ENCODE measurements at regions of chr3 and their contacts with region 1.

Region 1: DNA sequence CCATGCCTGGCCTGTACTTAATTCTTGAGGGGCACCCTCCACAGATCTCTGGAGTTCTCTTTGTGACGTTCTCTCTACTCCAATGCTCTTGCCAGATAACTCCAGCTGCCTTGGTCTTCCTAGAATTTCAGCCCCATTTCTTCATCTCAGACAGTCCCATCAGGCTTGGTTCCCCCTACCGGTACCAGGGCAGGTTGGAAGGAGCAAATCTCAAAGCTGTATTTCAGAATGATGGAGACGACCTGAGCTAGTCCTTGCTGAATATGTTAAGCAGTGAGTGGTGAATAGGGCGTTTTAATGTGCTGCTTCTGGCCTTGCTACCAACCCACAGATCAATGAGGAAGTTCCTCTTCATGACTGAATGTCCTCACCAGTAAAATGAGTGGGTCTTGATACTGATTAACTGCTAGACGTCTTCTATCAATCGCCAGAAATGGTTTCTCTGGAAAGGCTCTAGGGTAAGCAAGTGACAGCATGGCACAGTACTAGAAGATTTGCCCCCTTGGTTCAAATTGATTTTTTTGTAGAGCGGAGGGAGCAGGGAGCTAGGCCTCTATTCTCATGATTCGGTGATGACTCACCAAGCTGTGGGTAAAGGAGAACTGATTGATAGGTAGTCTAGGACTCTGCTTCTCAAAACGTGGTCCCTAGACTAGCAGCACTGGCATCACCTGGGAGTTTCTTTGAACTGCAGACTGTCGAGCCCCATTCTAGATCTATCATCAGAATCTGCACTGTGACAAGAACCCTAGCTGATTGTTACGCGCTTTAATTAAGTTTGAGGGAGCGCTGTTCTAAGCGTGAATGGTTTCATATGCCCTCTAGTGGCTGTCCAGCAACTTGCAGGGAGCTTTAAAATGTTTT is 67.8 kb downstream of the UBP1 start:
- DNase-seq: peak in 2 of 5 donors; percentile 30 to 48
- H3K4me3 ChIP-seq: no peak overlapping the region
- H3K27ac ChIP-seq: no peak overlapping the region
- H3K4me1 ChIP-seq: no peaks in the 10 kb centered on the region
- H3K27me3 ChIP-seq: no peaks in the 10 kb centered on the region
- CTCF ChIP-seq: peak; percentile 55 to 74 (median 72)
- EP300 ChIP-seq: no peak
- POLR2A ChIP-seq: no peak

Region 2: GRCh38 chr3:32951410-32951811 is 421.0 kb before region 1 on chr3 and contains the start of gene CCR4:
- intact Hi-C with region 1: loop called in 1 of 4 experiments (anchors 10 kb)
- DNase-seq: no peak
- H3K4me3 ChIP-seq: no peak within 1 kb of the TSS
- H3K27ac ChIP-seq: no peak within 1 kb of the TSS
- H3K4me1 ChIP-seq: peaks cover 3% of the 10 kb centered on the region
- H3K27me3 ChIP-seq: no peaks in the 10 kb centered on the region
- CTCF ChIP-seq: no peak
- EP300 ChIP-seq: no peak
- POLR2A ChIP-seq: no peak
- total RNA-seq, gene CCR4: 0.10 to 0.31 (median 0.16) TPM in 4 of 7 donors, not detected in the others

Region 3: GRCh38 chr3:32975891-32976595 is 396.4 kb before region 1 on chr3:
- intact Hi-C with region 1: no loop called
- DNase-seq: no peak
- H3K4me3 ChIP-seq: no peak overlapping the region
- H3K27ac ChIP-seq: no peak overlapping the region
- H3K4me1 ChIP-seq: peaks cover 6% of the 10 kb centered on the region
- H3K27me3 ChIP-seq: no peaks in the 10 kb centered on the region
- CTCF ChIP-seq: no peak
- EP300 ChIP-seq: no peak
- POLR2A ChIP-seq: no peak

Region 4: DNA sequence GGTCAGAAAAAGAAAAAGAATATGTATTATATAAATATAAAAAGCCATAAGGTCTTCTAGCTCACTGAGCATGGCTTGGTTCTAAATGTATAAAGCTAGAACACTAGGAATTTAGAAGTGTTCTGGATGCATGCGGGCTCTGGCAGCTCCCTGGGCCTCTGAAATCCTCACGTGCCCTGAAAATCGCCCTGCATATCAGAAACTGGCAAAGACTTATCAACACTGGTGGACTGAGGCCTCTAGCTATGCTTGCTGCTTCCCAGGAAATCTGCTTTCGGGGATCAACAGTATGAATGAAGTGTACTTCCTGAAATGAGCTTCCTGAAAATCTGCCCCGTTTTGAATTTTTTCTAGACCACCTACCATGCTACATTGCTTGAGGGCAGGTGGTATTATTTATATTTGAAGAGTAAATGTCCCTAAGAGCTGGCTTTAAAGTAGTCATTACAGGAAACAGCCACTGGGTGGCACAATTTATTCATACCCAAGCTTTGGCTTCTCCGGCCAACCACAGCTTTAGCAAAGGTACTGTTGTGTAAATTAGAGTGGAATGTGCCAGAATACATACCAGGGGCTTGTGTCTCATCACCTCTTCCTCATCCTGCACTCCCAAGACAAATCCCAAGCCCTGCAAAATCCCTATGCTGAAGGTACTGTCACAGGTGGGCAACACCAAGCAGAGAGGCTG is 241.0 kb before region 1 on chr3:
- intact Hi-C with region 1: loop called (anchors 5 kb)
- DNase-seq: peak in 1 of 5 donors; percentile 42
- H3K4me3 ChIP-seq: no peak overlapping the region
- H3K27ac ChIP-seq: no peak overlapping the region
- H3K4me1 ChIP-seq: no peaks in the 10 kb centered on the region
- H3K27me3 ChIP-seq: no peaks in the 10 kb centered on the region
- CTCF ChIP-seq: peak; percentile 44 to 75 (median 63)
- EP300 ChIP-seq: no peak
- POLR2A ChIP-seq: no peak

Region 5: DNA sequence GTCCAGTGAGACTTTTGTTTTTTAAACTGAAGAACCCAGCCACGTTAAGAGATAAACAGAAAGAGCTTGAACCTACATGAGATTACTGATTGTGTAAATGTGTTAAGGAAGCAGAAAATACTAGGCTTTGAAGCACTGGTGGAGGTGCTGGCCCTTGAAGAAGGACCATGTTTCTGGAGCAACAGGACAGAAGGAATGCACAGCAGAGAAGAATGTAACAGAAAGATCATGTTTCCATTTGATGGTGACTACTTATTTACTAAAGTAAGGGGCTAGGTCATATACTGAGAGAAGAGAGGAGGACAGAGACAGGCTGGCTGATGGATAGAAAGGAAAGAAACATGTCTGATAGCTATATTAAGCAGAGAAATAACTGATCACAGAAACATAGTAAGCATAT is 256.8 kb after region 1 on chr3:
- intact Hi-C with region 1: no loop called
- DNase-seq: no peak
- H3K4me3 ChIP-seq: no peak overlapping the region
- H3K27ac ChIP-seq: no peak overlapping the region
- H3K4me1 ChIP-seq: no peaks in the 10 kb centered on the region
- H3K27me3 ChIP-seq: no peaks in the 10 kb centered on the region
- CTCF ChIP-seq: no peak
- EP300 ChIP-seq: no peak
- POLR2A ChIP-seq: no peak

Measured in ovary (tissue), 10 donors.